ENCODE measurements at regions of chr11 and their contacts with region 1.

Region 1: GRCh38 chr11:66545701-66546367 is at the start of gene ZDHHC24:
- DNase-seq: peak; percentile 60 to 94 (median 74)
- ATAC-seq: peak; percentile 86
- H3K4me3 ChIP-seq: peak within 1 kb of the TSS; percentile 78
- H3K4me3 Mint-ChIP-seq: peak within 1 kb of the TSS; percentile 79 to 92 (median 88)
- H3K27ac ChIP-seq: peak within 1 kb of the TSS; percentile 90
- H3K27ac Mint-ChIP-seq: peak within 1 kb of the TSS; percentile 67 to 95 (median 89)
- H3K4me1 ChIP-seq: peaks cover 19 to 21% of the 10 kb centered on the region in 2 donors
- H3K4me1 Mint-ChIP-seq: peaks cover 13 to 46% (median 33%) of the 10 kb centered on the region in 7 donors
- H3K27me3 ChIP-seq: no peaks in the 10 kb centered on the region
- H3K27me3 Mint-ChIP-seq: peaks cover 0 to 16% (median 0%) of the 10 kb centered on the region in 5 donors
- total RNA-seq, gene ZDHHC24: 14.5 to 24.5 (median 19.2) TPM

Region 2: GRCh38 chr11:66480117-66480938 is 65.5 kb before region 1 on chr11 and contains the start of gene DPP3:
- CTCF ChIA-PET with region 1: no interaction called
- POLR2A ChIA-PET with region 1: interaction called, 3 read pairs
- intact Hi-C with region 1: loop called (anchors 1 kb)
- DNase-seq: peak; percentile 87 to 97 (median 95)
- ATAC-seq: peak; percentile 99
- H3K4me3 ChIP-seq: peak within 1 kb of the TSS; percentile 86
- H3K4me3 Mint-ChIP-seq: peak within 1 kb of the TSS; percentile 86 to 92 (median 90)
- H3K27ac ChIP-seq: peak within 1 kb of the TSS; percentile 90
- H3K27ac Mint-ChIP-seq: peak within 1 kb of the TSS; percentile 75 to 91 (median 90)
- H3K4me1 ChIP-seq: peaks cover 9 to 14% of the 10 kb centered on the region in 2 donors
- H3K4me1 Mint-ChIP-seq: peaks cover 9 to 37% (median 17%) of the 10 kb centered on the region in 7 donors
- H3K27me3 ChIP-seq: no peaks in the 10 kb centered on the region
- H3K27me3 Mint-ChIP-seq: no peaks in the 10 kb centered on the region
- total RNA-seq, gene DPP3: 15.8 to 75.7 (median 19.4) TPM

Region 3: DNA sequence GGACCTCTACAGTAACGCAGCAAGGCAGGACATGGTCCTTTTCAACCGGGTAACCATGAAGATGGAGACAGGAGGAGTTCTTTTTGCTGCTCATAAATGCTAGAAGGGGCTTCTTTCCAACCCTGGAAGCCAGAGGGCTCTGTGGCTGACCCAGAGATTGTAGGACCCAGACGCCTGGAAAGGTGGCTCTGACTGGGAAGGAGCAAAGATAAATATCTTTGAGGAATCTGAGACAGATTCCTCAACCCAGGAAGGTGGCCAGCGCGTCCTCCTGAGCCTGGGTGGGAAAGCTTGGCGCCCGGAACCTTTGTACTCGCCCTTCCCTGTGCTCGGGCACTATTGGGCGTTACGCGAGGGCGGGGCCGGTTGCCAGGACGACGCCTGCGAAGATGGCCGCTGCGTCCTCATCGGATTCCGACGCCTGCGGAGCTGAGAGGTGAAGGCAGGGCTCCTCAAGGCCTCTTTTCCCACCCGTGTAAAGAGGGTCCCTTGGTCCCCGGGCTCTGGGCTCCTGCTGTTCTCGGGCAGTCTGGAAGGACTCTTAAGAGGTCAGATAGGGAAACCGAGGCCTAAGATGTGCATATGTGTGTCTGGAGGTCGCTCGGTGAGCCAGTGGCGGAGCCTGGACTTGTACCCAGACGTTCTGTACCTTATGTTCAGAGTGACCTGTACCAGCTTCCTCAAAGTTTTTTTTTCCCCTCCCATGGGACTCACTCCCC is 35.4 kb before region 1 on chr11 and contains the start of gene BBS1:
- CTCF ChIA-PET with region 1: no interaction called
- POLR2A ChIA-PET with region 1: interaction called, 5 read pairs
- intact Hi-C with region 1: loop called (anchors 1 to 2 kb)
- DNase-seq: peak; percentile 64 to 85 (median 78)
- ATAC-seq: peak; percentile 98
- H3K4me3 ChIP-seq: peak within 1 kb of the TSS; percentile 89
- H3K4me3 Mint-ChIP-seq: peak within 1 kb of the TSS; percentile 86 to 95 (median 90)
- H3K27ac ChIP-seq: peak within 1 kb of the TSS; percentile 65
- H3K27ac Mint-ChIP-seq: peak within 1 kb of the TSS; percentile 36 to 77 (median 67)
- H3K4me1 ChIP-seq: peaks cover 6 to 10% of the 10 kb centered on the region in 2 donors
- H3K4me1 Mint-ChIP-seq: peaks cover 9 to 24% (median 18%) of the 10 kb centered on the region in 7 donors
- H3K27me3 ChIP-seq: no peaks in the 10 kb centered on the region
- H3K27me3 Mint-ChIP-seq: no peaks in the 10 kb centered on the region
- total RNA-seq, gene BBS1: 16.9 to 38.2 (median 23.6) TPM

Region 4: DNA sequence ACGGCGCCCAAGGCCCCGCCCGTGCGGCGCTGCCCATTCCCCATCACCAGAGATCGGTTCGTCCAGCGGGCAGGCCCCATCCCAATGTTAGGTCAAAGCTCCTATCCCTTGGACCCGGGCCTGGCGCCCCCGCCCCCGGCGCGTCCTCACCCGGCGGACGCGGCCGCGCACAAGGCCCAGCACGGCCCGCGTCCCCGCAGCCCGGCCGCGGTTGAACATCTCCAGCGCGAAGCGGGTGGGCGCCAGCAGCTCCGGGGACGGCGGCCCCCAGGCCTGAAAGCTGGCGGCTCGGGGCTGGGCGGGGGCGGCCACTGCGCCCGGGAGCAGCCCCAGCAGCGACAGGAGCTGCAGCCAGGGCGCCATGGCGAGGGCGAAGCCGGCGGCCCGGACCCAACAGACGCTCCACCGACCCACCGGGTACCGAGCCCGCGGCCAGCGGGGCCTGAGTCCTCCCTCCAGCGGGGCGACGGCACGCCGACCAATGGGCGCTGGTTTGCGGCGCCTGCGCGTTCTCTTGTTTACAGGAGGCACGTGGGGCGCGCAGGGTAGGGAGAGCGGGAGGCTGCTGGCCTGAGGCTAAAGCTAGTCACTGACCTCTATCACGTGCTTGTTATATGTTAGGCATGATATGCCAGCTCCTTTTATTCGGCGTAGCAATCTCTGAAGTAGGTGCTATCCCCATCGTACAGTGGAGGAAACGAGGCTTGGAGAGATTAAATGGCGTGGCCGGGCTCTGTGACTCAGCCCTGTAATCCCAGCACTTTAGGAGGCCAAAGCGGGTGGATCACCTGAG is 22.5 kb after region 1 on chr11 and contains the start of gene CTSF:
- CTCF ChIA-PET with region 1: no interaction called
- POLR2A ChIA-PET with region 1: interaction called, 18 read pairs
- intact Hi-C with region 1: loop called in 1 of 2 experiments (anchors 2 kb)
- DNase-seq: peak; percentile 55 to 72 (median 61)
- ATAC-seq: peak; percentile 93
- H3K4me3 ChIP-seq: peak within 1 kb of the TSS; percentile 65
- H3K4me3 Mint-ChIP-seq: peak within 1 kb of the TSS; percentile 77 to 89 (median 82)
- H3K27ac ChIP-seq: peak within 1 kb of the TSS; percentile 58
- H3K27ac Mint-ChIP-seq: peak within 1 kb of the TSS in 8 of 9 donors; percentile 77 to 90 (median 82)
- H3K4me1 ChIP-seq: peaks cover 0 to 6% of the 10 kb centered on the region in 2 donors
- H3K4me1 Mint-ChIP-seq: peaks cover 2 to 13% (median 8%) of the 10 kb centered on the region in 7 donors
- H3K27me3 ChIP-seq: no peaks in the 10 kb centered on the region
- H3K27me3 Mint-ChIP-seq: peaks cover 0 to 36% (median 0%) of the 10 kb centered on the region in 5 donors
- total RNA-seq, gene CTSF: 2.3 to 49.7 (median 21.1) TPM

Region 5: GRCh38 chr11:66592457-66593302 is 46.8 kb after region 1 on chr11 and contains the starts of genes CCDC87 and CCS:
- CTCF ChIA-PET with region 1: interaction called, 4 read pairs
- POLR2A ChIA-PET with region 1: interaction called, 3 read pairs
- intact Hi-C with region 1: loop called in 1 of 2 experiments (anchors 2 kb)
- DNase-seq: peak; percentile 94 to 98 (median 96)
- ATAC-seq: peak; percentile 98
- H3K4me3 ChIP-seq: peak within 1 kb of the TSS; percentile 98
- H3K4me3 Mint-ChIP-seq: peak within 1 kb of the TSS; percentile 89 to 100 (median 98)
- H3K27ac ChIP-seq: peak within 1 kb of the TSS; percentile 94
- H3K27ac Mint-ChIP-seq: peak within 1 kb of the TSS; percentile 90 to 100 (median 97)
- H3K4me1 ChIP-seq: peaks cover 9 to 30% of the 10 kb centered on the region in 2 donors
- H3K4me1 Mint-ChIP-seq: peaks cover 13 to 40% (median 28%) of the 10 kb centered on the region in 7 donors
- H3K27me3 ChIP-seq: no peaks in the 10 kb centered on the region
- H3K27me3 Mint-ChIP-seq: no peaks in the 10 kb centered on the region
- total RNA-seq, gene CCDC87: 0.11 to 1.2 (median 0.60) TPM in 4 of 5 experiments, not detected in the other
- total RNA-seq, gene CCS: 32.8 to 63.5 (median 42.5) TPM

Region 6: DNA sequence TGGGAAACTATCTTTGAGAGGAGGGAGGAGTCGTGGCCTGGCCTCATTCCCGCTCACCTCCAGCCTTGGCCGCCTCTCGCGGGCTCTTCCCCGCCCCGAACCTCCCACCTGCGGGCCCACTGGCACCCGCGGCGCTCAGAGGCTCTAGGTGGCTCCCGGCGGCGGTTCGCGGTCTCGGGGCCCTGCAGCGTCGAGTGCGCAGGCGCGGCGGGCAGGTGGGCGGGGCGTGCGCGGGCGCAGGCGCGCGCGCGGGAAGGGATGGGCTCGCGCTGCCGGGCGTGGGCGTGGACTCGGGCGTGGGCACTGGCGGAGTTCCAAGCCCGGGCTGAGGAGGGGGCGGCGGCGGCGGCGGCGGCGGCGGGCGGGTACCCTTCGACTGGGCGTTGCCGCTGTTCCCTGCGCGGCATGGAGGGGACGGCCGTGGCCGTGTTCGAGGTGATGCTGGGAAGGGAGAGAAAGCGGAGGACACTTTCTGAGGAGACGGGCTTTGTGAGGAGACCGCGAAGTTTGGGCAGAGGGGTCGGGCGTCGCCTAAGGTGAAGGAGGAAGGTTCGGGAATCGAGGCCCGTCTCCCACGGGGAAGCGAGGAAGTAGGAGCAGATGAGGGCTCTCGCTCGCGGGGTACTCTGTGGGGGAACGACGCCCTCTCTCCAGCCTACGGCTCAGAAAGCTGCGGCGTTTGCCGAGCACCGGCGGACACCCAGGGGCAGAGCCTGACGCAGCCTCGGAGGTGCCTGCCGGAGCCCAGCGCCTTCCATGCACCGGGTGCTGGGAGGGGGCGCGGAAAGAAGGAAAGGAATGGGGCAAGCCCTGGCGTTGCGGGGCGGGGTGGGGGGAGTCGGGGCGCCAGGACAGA is 198.9 kb after region 1 on chr11:
- CTCF ChIA-PET with region 1: no interaction called
- POLR2A ChIA-PET with region 1: interaction called, 3 read pairs
- intact Hi-C with region 1: loop called (anchors 2 to 5 kb)
- DNase-seq: peak; percentile 83 to 98 (median 91)
- ATAC-seq: peak; percentile 97
- H3K4me3 ChIP-seq: peak overlapping the region; percentile 83
- H3K4me3 Mint-ChIP-seq: peak overlapping the region; percentile 82 to 97 (median 94)
- H3K27ac ChIP-seq: peak overlapping the region; percentile 89
- H3K27ac Mint-ChIP-seq: peak overlapping the region; percentile 18 to 89 (median 81)
- H3K4me1 ChIP-seq: peaks cover 0 to 3% of the 10 kb centered on the region in 2 donors
- H3K4me1 Mint-ChIP-seq: peaks cover 0 to 16% (median 4%) of the 10 kb centered on the region in 7 donors
- H3K27me3 ChIP-seq: no peaks in the 10 kb centered on the region
- H3K27me3 Mint-ChIP-seq: peaks cover 0 to 10% (median 0%) of the 10 kb centered on the region in 5 donors

Measured in naive thymus-derived CD4-positive, alpha-beta T cell (primary cell).